ENCODE measurements at regions of chr4 and their contacts with region 1.

Region 1: GRCh38 chr4:168319486-168320019 is 1.0 kb upstream of the DDX60 start:
- DNase-seq: no peak
- H3K4me3 ChIP-seq: no peak overlapping the region
- H3K4me3 Mint-ChIP-seq: no peak overlapping the region
- H3K27ac Mint-ChIP-seq: no peak overlapping the region
- H3K4me1 ChIP-seq: no peaks in the 10 kb centered on the region
- H3K4me1 Mint-ChIP-seq: no peaks in the 10 kb centered on the region
- H3K27me3 ChIP-seq: no peaks in the 10 kb centered on the region
- H3K27me3 Mint-ChIP-seq: peaks cover 21% of the 10 kb centered on the region
- CTCF ChIP-seq: no peak

Region 2: DNA sequence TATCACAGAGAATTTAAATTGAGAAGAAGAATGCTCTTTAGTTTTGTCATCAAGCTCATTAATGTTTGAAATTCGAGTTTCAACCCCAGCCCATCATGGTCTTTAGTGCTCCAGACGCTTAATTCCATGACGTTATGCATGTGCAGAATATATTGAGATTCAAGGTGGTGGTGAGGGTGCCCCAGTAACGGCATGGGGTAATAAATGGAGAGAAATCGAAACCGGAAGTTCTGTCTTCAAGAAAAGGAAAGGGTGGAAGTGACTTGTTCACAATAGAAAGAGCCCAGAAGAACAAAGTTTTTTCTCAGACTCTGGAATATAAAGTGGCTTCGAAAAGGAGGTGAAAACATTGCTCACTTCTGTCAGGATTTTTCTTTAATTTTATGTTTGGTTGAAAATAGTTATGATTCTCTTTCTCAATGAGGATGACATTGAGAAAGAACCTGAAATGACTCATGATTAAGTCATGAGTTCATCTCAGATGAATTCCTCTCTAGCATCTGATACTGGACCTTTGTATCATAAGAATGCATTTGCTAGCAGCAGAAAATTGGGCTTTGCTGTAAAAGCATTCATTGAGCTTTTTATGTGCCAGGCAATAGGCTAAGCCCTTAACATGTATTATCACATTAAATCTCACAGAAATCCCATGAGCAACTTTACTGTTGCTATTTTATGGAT is 161.5 kb after region 1 on chr4:
- CTCF ChIA-PET with region 1: no interaction called
- POLR2A ChIA-PET with region 1: no interaction called
- intact Hi-C with region 1: loop called (anchors 10 kb)
- DNase-seq: peak in 1 of 2 experiments; percentile 12
- H3K4me3 ChIP-seq: peak overlapping the region; percentile 57
- H3K4me3 Mint-ChIP-seq: peak overlapping the region; percentile 92
- H3K27ac Mint-ChIP-seq: peak overlapping the region; percentile 91
- H3K4me1 ChIP-seq: peaks cover 4% of the 10 kb centered on the region; the same call in 1 of the 2 replicates
- H3K4me1 Mint-ChIP-seq: peaks cover 14% of the 10 kb centered on the region
- H3K27me3 ChIP-seq: no peaks in the 10 kb centered on the region
- H3K27me3 Mint-ChIP-seq: peaks cover 12% of the 10 kb centered on the region
- CTCF ChIP-seq: no peak

Region 3: DNA sequence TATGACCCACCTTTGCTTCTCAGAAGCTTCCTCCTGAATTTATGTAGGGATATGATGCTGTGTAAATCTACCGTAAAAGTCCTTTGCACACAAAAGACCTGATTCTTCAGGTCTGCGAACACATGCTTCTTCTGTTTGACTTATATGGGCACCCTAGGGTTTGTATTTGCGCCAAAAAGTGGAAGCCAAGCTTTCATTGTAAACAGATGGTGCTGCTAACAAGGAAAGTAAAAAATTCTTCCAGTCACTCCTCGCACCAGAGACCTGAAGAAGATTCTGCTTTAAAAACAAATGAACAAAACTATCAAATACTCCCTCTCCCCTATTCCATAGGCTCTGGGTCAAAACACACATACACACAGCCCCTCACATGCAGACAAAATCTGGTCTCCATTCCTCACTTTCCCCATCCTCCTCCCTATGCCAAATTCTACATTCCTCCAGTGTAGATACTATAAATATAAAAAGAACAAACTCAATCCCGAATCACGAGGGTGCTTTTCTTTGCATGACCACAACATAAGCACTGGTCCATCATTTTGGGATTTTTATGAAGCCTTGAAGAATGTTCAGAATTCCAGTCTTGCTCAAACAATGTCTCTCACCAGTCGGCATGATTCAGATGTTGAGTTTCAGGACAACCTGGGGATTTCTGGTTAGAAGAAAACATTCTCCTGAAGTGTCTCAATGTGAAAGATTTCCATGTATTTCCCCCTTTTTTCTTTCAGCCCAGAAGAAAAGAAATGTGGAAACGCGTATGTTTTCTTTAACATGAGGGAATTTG is 302.4 kb after region 1 on chr4:
- CTCF ChIA-PET with region 1: no interaction called
- POLR2A ChIA-PET with region 1: no interaction called
- intact Hi-C with region 1: no loop called
- DNase-seq: no peak
- H3K4me3 ChIP-seq: no peak overlapping the region
- H3K4me3 Mint-ChIP-seq: no peak overlapping the region
- H3K27ac Mint-ChIP-seq: no peak overlapping the region
- H3K4me1 ChIP-seq: no peaks in the 10 kb centered on the region
- H3K4me1 Mint-ChIP-seq: no peaks in the 10 kb centered on the region
- H3K27me3 ChIP-seq: no peaks in the 10 kb centered on the region
- H3K27me3 Mint-ChIP-seq: peaks cover 7% of the 10 kb centered on the region
- CTCF ChIP-seq: no peak

Measured in Caco-2 (cell line).